ENCODE measurements at regions of chr11 and their contacts with region 1.

Region 1: GRCh38 chr11:118997627-118998387 is at the start of gene CENATAC:
- DNase-seq: no peak
- H3K4me3 ChIP-seq: peak within 1 kb of the TSS; percentile 67
- CTCF ChIP-seq: no peak

Region 2: DNA sequence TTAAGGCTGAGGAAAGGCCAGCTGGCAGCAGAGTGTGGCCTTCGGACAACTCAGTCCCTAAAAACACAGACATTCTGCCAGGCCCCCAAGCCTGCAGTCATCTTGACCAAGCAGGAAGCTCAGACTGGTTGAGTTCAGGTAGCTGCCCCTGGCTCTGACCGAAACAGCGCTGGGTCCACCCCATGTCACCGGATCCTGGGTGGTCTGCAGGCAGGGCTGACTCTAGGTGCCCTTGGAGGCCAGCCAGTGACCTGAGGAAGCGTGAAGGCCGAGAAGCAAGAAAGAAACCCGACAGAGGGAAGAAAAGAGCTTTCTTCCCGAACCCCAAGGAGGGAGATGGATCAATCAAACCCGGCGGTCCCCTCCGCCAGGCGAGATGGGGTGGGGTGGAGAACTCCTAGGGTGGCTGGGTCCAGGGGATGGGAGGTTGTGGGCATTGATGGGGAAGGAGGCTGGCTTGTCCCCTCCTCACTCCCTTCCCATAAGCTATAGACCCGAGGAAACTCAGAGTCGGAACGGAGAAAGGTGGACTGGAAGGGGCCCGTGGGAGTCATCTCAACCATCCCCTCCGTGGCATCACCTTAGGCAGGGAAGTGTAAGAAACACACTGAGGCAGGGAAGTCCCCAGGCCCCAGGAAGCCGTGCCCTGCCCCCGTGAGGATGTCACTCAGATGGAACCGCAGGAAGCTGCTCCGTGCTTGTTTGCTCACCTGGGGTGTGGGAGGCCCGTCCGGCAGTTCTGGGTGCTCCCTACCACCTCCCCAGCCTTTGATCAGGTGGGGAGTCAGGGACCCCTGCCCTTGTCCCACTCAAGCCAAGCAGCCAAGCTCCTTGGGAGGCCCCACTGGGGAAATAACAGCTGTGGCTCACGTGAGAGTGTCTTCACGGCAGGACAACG is 102.4 kb before region 1 on chr11:
- CTCF ChIA-PET with region 1: no interaction called
- POLR2A ChIA-PET with region 1: no interaction called
- DNase-seq: no peak
- H3K4me3 ChIP-seq: no peak overlapping the region
- CTCF ChIP-seq: no peak

Region 3: GRCh38 chr11:118971646-118972045 is 26.2 kb before region 1 on chr11 and contains the start of gene FOXR1:
- CTCF ChIA-PET with region 1: no interaction called
- POLR2A ChIA-PET with region 1: no interaction called
- DNase-seq: no peak
- H3K4me3 ChIP-seq: no peak within 1 kb of the TSS
- CTCF ChIP-seq: no peak

Region 4: GRCh38 chr11:118984825-118985224 is 13.0 kb before region 1 on chr11:
- CTCF ChIA-PET with region 1: interaction called, 11 read pairs
- POLR2A ChIA-PET with region 1: no interaction called
- DNase-seq: no peak
- H3K4me3 ChIP-seq: no peak overlapping the region
- CTCF ChIP-seq: no peak

Region 5: DNA sequence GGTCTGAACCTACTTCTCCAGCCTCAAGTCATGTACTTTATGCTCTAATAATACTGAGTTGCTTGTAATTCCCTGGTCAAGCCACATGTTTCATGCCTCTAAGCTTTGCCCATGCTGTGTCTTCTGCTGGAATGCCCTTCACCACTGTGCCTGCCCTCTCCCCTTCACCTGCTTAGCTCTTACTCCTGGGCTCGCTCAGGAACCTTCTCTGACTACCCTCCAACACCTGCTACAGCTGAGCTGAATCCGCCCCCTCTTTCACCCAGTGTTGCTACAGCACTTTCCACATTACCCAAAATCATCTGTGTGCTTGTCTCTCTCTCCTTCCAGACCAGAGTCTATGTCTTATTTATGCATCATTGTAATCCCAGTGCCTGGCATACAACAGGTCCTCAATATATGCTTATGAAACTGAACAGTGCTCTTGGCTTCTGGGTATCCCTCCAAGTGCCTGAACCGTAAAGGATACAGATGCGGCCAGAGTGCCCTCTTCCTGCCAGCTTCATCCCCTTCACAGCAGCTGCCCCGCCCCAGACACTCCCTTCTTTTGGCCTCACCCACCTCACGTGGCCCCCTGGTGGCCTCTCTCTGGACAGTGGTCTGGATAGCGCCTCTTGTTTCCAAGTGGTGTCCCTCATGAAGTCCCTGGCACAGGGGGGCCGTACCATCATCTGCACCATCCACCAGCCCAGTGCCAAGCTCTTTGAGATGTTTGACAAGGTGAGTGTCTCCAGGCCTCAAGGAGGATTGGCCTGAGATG is 158.1 kb after region 1 on chr11:
- CTCF ChIA-PET with region 1: no interaction called
- POLR2A ChIA-PET with region 1: no interaction called
- DNase-seq: no peak
- H3K4me3 ChIP-seq: no peak overlapping the region
- CTCF ChIP-seq: peak; percentile 4

Measured in AG04449 (cell line).